AG04449 (cell line): ENCODE measurements at regions of chr2 and their contacts with region 1.

Region 1: GRCh38 chr2:10141736-10142642 is 19.4 kb downstream of the RRM2 start:
- DNase-seq: no peak
- H3K4me3 ChIP-seq: no peak overlapping the region
- CTCF ChIP-seq: peak; percentile 56

Region 2: DNA sequence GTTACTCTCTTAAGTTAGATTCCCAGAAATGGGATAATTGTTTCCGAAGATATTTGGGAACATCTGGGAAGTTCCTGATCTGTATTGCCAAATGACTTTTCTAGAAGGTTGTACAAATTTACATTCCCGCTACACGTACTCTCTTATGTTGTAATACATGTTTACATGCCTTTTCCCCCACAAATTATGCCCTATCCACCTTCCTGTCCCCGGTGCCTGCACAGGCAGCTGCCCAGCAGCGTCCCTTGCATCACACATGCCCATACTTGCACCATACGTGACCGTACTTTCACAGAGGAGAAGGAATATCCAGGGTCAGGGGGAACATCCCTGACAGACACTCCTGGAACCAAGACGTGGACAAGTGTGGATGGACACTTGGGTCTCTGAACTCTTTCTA is 122.8 kb before region 1 on chr2:
- CTCF ChIA-PET with region 1: no interaction called
- POLR2A ChIA-PET with region 1: no interaction called
- DNase-seq: no peak
- H3K4me3 ChIP-seq: no peak overlapping the region
- CTCF ChIP-seq: no peak

Region 3: DNA sequence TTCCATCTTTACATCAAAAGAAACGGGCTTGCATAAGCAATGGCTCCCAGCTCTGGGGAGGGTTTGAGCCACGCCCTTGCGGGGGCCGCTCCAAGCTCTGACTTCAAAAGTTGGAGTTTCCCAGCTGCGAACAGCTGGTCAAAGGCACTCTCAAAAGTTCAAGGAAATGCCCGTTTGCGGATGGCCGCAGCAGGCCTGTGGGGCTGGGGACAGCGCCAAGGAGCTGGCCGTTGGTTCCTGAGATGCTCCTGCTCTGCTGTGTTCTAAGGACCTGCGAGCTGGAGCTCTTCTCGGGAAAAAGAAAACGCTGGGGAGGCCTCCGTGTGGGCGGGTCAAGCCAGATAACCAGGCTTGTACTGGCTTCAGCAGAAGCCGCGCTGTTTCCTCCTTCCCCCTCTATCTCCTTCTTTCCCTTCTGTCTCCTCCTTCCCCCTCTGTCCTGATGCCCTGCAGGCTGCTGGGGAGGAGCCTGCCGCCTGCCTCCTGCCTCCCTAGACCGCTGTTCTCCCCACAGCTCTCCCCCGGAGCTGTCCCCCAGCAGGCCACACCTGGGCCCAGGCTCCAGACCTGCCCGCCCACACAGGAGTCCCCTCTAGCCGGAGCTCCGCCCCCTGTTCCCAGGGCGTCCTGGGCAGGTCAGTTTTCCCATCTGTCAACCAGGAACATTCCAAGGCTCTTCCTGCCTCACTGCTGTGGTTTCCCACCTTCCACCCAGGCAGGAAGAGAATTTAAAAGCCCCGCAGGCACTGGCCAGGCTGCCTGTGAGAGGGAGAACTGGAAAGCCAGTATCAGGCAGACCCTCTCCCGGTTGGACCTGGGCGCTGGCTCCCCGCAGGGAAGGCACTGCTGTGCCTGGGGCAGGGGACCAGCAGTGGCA is 84.5 kb before region 1 on chr2:
- CTCF ChIA-PET with region 1: no interaction called
- POLR2A ChIA-PET with region 1: no interaction called
- DNase-seq: no peak
- H3K4me3 ChIP-seq: peak overlapping the region; percentile 34
- CTCF ChIP-seq: no peak

Region 4: DNA sequence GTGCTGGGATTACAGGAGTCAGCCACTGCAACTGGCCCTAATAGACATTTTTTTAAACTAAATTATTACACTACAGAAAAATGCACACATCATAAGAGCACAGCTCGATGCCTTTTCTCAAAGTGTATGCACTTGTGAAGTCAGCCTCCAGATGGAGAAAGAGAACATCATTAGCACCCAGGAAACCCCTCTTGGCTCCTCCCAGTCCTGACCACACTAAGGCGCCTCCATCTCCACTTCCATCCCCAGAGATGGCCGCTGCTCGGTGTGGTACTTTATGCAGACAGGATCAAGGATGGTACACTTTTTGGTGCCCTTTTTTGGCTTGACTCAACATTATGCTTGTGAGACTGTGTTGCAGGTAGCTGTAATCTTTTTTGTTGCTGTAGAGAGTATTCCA is 15.3 kb after region 1 on chr2:
- CTCF ChIA-PET with region 1: interaction called, 10 read pairs
- POLR2A ChIA-PET with region 1: no interaction called
- DNase-seq: no peak
- H3K4me3 ChIP-seq: no peak overlapping the region
- CTCF ChIP-seq: no peak